SK-N-SH (cell line): ENCODE measurements at regions of chr22 and their contacts with region 1.

Region 1: DNA sequence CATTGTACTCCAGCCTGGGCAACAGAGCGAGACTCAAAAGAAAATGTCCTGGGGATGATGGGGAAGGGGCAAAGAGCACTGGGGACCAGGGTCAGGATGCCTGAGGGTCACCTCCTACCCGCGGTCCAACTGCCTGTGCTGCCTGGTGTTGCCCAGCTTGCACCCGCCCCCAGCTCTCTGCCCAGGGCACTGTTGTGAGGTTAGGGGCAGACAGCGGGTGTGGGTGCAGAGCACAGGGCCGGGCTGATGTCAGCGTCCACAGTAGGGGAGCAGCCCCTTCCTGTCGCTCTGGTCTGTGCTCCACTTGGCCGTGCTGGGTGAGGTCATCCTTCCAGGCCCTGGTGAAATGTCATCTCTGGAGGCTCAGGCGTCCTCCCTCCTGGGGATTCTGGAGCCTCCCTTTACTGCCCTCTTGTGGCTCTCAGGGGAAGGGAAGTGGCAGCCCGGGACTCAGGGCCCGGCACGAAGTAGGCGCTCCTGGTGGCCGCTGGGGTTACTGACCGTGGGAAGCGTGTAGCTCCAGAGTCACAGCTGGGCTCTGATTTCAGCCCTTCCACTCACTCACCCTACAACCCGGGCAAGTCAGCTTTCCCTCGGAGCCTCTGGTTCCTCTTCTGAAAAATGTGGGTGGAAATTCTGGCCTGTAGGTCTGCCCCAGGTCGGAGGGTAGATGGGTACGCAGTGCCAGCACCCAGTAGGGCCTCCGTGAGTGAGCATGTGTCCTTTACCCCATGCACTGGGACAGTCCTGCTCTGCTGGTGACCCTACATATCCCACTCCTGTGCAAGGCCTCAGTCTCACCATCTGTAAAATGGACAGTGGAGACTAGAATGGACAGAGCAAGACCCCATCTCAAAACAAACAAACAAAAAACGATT is 17.3 kb upstream of the PRR5 start:
- DNase-seq: peak; percentile 92
- H3K4me3 ChIP-seq: peak overlapping the region in 1 of 2 experiments; percentile 52; a peak in 1 of 4 replicates
- H3K27ac ChIP-seq: peak overlapping the region in 1 of 2 experiments; percentile 59; a peak in 1 of 4 replicates
- H3K4me1 ChIP-seq: peaks cover 0 to 16% of the 10 kb centered on the region in 2 experiments; a peak in 1 of 4 replicates
- H3K27me3 ChIP-seq: no peaks in the 10 kb centered on the region
- CTCF ChIP-seq: peak; percentile 97
- EP300 ChIP-seq: no peak
- RAD21 ChIP-seq: peak; percentile 72

Region 2: DNA sequence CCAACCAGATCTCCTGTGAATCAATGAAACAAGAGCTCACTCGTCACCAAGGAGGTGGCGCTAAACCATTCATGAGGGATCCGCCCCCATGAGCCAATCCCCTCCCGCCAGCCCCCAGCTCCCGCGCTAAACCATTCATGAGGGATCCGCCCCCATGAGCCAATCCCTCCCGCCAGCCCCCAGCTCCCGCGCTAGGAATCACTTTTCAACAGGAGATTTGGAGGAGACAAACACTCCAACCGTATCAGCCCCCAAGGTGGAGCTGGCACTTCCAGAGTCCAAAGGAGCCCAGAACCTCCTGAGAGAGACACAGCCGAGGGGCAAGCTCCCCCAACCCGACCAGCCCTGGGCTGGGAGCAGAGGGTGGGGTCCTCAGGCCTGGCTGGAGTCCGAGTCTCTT is 23.7 kb before region 1 on chr22:
- CTCF ChIA-PET with region 1: interaction called, 11 read pairs
- POLR2A ChIA-PET with region 1: no interaction called
- DNase-seq: peak; percentile 2
- H3K4me3 ChIP-seq: no peak overlapping the region
- H3K27ac ChIP-seq: no peak overlapping the region
- H3K4me1 ChIP-seq: peaks cover 0 to 21% of the 10 kb centered on the region in 2 experiments; a peak in 1 of 4 replicates
- H3K27me3 ChIP-seq: no peaks in the 10 kb centered on the region; the same call in 1 of the 2 replicates
- CTCF ChIP-seq: no peak
- EP300 ChIP-seq: no peak
- RAD21 ChIP-seq: no peak

Region 3: DNA sequence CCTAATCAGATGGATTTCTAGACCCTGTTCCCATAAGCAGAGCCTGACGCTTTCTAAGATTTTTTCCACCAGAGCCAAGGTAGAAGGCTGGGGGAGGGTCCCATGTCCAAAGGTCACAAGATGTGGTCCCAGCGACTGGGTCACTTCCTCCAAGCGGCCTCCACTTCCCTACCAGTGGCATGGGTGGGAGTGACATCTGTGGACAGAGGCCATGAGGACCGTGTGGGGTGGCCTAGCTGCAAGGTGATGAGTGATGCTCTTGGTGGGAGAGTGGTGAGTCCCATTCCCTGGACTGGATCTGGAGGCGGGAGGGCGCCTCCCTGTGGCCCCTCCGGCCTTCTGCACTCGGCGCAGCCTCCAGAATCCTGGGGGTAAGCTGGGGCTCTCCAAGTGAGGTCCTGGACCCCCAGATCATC is 15.2 kb before region 1 on chr22:
- CTCF ChIA-PET with region 1: interaction called, 30 read pairs
- POLR2A ChIA-PET with region 1: no interaction called
- DNase-seq: peak; percentile 69
- H3K4me3 ChIP-seq: peak overlapping the region in 1 of 2 experiments; percentile 56; a peak in 2 of 4 replicates
- H3K27ac ChIP-seq: no peak overlapping the region
- H3K4me1 ChIP-seq: peaks cover 0 to 15% of the 10 kb centered on the region in 2 experiments; a peak in 1 of 4 replicates
- H3K27me3 ChIP-seq: no peaks in the 10 kb centered on the region; the same call in 1 of the 2 replicates
- CTCF ChIP-seq: peak; percentile 52
- EP300 ChIP-seq: no peak
- RAD21 ChIP-seq: peak; percentile 43

Region 4: GRCh38 chr22:44735540-44736488 is 51.1 kb after region 1 on chr22:
- CTCF ChIA-PET with region 1: interaction called, 642 read pairs
- POLR2A ChIA-PET with region 1: no interaction called
- DNase-seq: peak; percentile 94
- H3K4me3 ChIP-seq: no peak overlapping the region; a peak in 1 of 4 replicates
- H3K27ac ChIP-seq: no peak overlapping the region
- H3K4me1 ChIP-seq: no peaks in the 10 kb centered on the region; a peak in 1 of 4 replicates
- H3K27me3 ChIP-seq: no peaks in the 10 kb centered on the region
- CTCF ChIP-seq: peak; percentile 87
- EP300 ChIP-seq: no peak
- RAD21 ChIP-seq: peak; percentile 92

Region 5: DNA sequence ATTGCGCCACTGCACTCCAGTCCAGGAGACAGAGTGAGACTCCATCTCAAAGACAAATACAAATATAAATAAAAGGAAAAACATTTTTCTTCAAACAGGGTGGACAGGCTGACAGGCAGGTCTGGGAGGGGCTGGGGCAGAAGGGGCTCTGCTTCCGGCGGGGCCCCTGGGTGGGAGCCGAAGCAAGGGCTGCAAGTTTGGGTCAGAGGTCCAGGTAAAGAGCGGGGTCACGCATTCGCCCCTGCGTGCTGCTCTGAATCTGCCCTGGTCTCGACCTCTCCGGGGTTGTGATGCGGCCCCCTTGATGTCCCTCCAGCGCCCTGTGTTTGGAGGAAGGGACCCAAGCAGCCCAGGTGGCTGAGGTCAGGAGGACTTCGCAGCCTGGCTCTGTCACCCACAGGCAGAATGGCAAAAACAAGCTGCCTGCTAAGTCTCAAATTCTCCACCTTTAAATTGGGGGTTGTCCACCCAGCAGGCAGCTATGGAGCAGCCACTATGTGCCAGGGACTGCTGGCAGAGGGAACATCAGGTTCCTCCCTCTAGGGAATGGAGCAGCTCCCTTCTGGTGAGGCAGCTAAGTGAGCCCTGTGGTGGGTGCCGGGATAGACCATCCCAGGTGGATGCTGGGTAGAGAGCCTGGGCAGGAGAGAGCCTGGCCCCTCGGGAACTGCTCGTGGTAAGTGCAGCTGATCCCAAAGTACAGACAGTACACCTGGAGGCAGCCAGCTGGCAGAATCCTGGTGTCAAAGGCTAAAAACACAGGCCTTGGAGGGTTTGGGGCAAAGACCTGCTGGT is 335.3 kb after region 1 on chr22:
- CTCF ChIA-PET with region 1: no interaction called
- POLR2A ChIA-PET with region 1: no interaction called
- DNase-seq: no peak
- H3K4me3 ChIP-seq: no peak overlapping the region
- H3K27ac ChIP-seq: no peak overlapping the region
- H3K4me1 ChIP-seq: no peaks in the 10 kb centered on the region
- H3K27me3 ChIP-seq: peaks cover 10% of the 10 kb centered on the region; the same call in 1 of the 2 replicates
- CTCF ChIP-seq: no peak
- EP300 ChIP-seq: no peak
- RAD21 ChIP-seq: no peak